ENCODE measurements at regions of chr5 and their contacts with region 1.

Region 1: DNA sequence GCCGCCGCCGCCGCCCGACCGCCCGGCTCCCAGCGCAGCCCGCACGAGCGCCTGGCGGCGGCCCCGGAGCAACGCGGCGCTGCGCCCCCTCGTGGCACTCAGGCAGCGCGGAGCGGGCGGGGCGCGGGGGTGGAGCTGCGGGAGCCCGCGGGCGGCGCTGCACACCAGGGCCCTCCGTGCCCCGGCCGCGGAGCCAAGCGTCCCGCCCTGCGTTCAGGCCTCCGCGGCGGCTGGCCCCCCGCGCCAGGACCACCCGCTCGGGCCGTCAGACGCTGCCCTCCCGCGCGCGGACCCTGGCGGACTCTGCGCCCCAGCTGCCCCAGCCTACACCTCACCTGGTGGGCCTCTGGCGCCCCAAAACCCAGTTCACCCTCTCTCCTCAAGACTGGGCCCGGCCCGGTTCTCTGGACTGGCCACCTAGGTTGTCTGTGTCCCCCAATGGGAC is at the start of gene RASGEF1C:
- DNase-seq: peak; percentile 20 to 80 (median 57)
- ATAC-seq: peak; percentile 96
- H3K4me3 ChIP-seq: no peak within 1 kb of the TSS
- H3K4me3 Mint-ChIP-seq: peak within 1 kb of the TSS; percentile 67
- H3K27ac ChIP-seq: no peak within 1 kb of the TSS
- H3K27ac Mint-ChIP-seq: no peak within 1 kb of the TSS
- H3K4me1 ChIP-seq: no peaks in the 10 kb centered on the region
- H3K4me1 Mint-ChIP-seq: peaks cover 5% of the 10 kb centered on the region
- H3K27me3 ChIP-seq: peaks cover 14 to 19% of the 10 kb centered on the region in 2 experiments
- H3K27me3 Mint-ChIP-seq: peaks cover 53% of the 10 kb centered on the region
- CTCF ChIP-seq: no peak
- total RNA-seq, gene RASGEF1C: not detected

Region 2: DNA sequence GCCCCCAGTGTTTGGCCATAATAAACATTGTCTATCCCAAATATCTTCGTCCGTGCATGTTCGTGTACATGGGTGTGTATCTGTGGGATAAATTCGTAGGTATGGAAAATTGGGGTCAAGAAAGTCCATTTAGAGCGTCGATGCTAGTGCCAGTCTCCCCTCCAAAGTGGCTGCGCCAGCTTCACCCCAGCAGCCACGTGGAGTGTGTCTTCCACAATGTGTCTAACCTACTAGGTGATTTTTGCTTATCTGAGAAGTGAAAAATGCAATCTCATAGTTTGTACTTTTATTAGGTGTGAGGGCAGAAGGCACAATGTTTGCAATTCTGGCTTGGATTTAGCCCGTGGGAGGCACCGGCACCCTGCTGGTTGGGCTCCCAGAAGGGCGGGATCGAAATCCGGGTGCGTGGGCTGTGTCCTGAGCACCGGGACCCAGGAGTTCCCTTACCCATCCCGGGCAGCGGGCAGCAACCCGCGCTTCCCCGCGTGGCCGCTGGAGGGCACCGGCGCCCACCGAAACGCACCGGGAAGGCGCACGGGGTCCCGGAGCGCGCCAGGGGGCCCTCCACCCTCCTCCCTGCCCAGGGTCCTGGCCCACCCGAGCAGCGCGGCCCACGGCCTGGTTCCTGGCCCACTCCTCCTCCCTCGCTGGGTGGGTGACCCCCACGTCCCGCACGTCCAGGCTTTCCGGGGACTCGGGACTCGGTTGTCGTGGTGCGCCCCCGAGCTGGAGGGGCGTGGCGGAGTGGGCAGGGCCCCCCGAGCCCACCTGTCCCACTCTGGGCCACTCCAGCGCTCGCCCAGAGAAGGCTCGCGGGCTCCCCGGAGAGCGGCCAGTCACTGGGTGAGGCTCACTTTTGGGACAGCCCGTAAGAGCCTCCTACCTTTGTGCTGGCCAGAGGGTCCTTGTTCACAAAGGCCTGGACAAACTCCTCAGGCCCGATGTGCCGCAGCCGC is 82.2 kb before region 1 on chr5:
- CTCF ChIA-PET with region 1: no interaction called
- POLR2A ChIA-PET with region 1: no interaction called
- intact Hi-C with region 1: loop called in 1 of 2 experiments (anchors 5 kb)
- DNase-seq: peak in 5 of 9 experiments; percentile 28 to 56 (median 44)
- ATAC-seq: no peak
- H3K4me3 ChIP-seq: no peak overlapping the region
- H3K4me3 Mint-ChIP-seq: no peak overlapping the region
- H3K27ac ChIP-seq: no peak overlapping the region
- H3K27ac Mint-ChIP-seq: no peak overlapping the region
- H3K4me1 ChIP-seq: no peaks in the 10 kb centered on the region
- H3K4me1 Mint-ChIP-seq: no peaks in the 10 kb centered on the region
- H3K27me3 ChIP-seq: no peaks in the 10 kb centered on the region
- H3K27me3 Mint-ChIP-seq: peaks cover 14% of the 10 kb centered on the region
- CTCF ChIP-seq: peak; percentile 77

Region 3: DNA sequence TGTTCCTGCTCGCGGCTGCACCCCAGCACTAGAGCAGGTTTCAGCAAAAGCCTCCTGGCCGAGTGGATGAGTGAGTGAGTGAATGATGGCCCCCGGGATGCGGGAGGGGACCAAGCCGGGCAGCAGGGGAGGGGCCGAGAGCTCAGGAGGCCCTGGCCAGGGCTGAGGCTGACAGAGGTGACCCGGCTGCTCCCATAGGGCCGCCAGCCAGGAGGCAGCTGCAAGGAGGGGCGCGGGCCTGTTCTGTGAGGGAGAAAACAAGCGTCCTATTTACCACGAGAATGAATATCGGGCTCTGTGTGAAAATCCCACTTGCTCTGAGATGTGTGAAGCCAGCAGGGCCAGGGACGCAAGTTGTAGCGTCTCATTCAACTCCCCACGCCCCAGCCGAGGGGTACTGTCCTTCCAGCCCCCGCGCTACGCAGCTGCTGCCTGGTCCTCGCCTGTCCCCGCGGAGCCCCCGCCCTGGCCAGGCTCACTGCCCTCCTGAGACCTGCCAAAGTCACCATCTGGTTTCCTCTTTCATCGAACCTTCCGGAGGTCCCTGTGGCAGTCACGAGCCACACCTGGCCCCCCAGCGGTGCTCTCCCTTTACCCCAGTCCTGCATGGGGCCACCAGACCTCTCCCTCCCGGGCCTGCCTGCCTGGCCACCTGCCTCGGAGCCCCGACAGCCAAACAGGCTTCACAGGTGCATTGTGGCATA is 38.9 kb before region 1 on chr5:
- CTCF ChIA-PET with region 1: no interaction called
- POLR2A ChIA-PET with region 1: no interaction called
- intact Hi-C with region 1: no loop called
- DNase-seq: no peak
- ATAC-seq: no peak
- H3K4me3 ChIP-seq: no peak overlapping the region
- H3K4me3 Mint-ChIP-seq: no peak overlapping the region
- H3K27ac ChIP-seq: no peak overlapping the region
- H3K27ac Mint-ChIP-seq: no peak overlapping the region
- H3K4me1 ChIP-seq: no peaks in the 10 kb centered on the region
- H3K4me1 Mint-ChIP-seq: no peaks in the 10 kb centered on the region
- H3K27me3 ChIP-seq: peaks cover 0 to 2% of the 10 kb centered on the region in 2 experiments
- H3K27me3 Mint-ChIP-seq: peaks cover 17% of the 10 kb centered on the region
- CTCF ChIP-seq: no peak

Region 4: DNA sequence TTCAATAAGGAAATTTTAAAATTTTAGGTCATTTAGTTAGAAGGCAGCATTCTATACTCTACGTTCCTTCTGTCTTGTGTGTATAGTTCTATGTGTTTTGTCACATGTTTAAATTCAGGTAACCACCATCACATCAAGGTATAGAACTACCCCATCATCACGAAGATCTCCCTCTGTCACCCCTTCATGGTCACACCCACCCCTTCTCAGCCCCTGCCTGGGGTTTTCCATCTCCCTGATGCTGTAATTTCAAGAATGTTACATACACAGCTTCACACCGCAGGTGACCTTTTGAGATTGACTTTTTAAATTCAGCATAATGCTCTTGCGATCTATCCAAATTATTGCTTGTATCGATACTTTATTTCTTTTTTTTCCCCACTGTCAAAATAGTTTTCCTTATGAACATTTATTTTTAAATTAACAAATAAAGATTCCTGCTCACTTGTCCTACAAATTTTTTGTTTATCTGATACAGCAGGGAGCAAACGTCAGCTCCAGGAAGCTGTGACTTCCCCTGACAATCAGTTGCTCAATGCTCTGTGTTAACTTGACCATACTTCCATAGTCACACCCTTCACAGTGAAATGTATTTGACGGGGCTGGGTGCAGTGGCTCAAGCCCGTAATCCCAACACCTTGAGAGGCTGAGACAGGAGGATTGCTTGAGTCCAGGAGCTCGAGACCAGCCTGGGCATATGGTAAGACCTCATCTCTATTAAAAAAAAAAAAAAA is 700.0 kb after region 1 on chr5:
- CTCF ChIA-PET with region 1: no interaction called
- POLR2A ChIA-PET with region 1: no interaction called
- intact Hi-C with region 1: no loop called
- DNase-seq: no peak
- ATAC-seq: no peak
- H3K4me3 ChIP-seq: no peak overlapping the region
- H3K4me3 Mint-ChIP-seq: no peak overlapping the region
- H3K27ac ChIP-seq: no peak overlapping the region
- H3K27ac Mint-ChIP-seq: no peak overlapping the region
- H3K4me1 ChIP-seq: no peaks in the 10 kb centered on the region
- H3K4me1 Mint-ChIP-seq: no peaks in the 10 kb centered on the region
- H3K27me3 ChIP-seq: no peaks in the 10 kb centered on the region
- H3K27me3 Mint-ChIP-seq: peaks cover 36% of the 10 kb centered on the region
- CTCF ChIP-seq: no peak